ENCODE measurements at regions of chr20 and their contacts with region 1.

Region 1: DNA sequence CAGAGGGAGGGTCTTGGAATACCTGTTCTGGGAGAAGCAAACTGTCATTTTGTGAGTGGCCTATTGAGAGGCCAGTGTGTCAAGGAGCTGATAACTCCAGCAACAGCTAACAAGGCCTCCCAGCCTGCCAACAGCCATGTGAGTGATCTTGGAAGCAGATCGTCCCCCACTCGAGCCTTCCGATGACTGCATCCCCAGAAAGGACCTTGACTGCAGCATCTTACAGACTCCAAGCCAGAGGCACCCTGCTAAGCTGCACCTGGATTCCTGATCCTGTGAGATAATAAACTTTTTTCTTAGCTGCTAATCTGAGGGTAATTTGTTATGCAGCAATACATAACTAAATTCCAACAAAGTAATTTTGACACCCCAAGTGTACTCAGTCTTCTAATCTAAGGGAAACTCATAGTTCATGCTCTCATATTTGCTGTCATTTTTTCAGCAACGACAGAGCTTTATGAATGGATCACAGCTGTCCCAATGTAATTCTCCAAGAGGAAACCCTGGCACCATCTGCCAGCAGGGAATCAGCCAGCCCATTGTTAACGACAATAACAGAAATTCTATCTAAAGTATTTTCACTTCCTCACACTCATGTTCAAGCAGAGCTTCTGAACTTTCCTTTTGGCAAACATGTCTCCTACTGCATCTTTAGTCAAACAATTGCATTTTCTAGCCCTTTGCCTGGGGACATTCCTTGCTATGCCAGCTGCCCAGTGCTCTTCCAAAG is 470.2 kb upstream of the BTBD3 start:
- DNase-seq: no peak
- ATAC-seq: no peak
- H3K4me3 Mint-ChIP-seq: no peak overlapping the region
- H3K27ac Mint-ChIP-seq: no peak overlapping the region
- H3K4me1 Mint-ChIP-seq: no peaks in the 10 kb centered on the region
- H3K27me3 Mint-ChIP-seq: no peaks in the 10 kb centered on the region

Region 2: GRCh38 chr20:11168026-11168425 is 279.5 kb before region 1 on chr20:
- CTCF ChIA-PET with region 1: no interaction called
- POLR2A ChIA-PET with region 1: no interaction called
- intact Hi-C with region 1: no loop called
- DNase-seq: no peak
- ATAC-seq: no peak
- H3K4me3 Mint-ChIP-seq: no peak overlapping the region
- H3K27ac Mint-ChIP-seq: no peak overlapping the region
- H3K4me1 Mint-ChIP-seq: no peaks in the 10 kb centered on the region
- H3K27me3 Mint-ChIP-seq: peaks cover 3% of the 10 kb centered on the region

Region 3: GRCh38 chr20:11338496-11339306 is 108.8 kb before region 1 on chr20:
- CTCF ChIA-PET with region 1: no interaction called
- POLR2A ChIA-PET with region 1: no interaction called
- intact Hi-C with region 1: no loop called
- DNase-seq: no peak
- ATAC-seq: no peak
- H3K4me3 Mint-ChIP-seq: no peak overlapping the region
- H3K27ac Mint-ChIP-seq: no peak overlapping the region
- H3K4me1 Mint-ChIP-seq: no peaks in the 10 kb centered on the region
- H3K27me3 Mint-ChIP-seq: no peaks in the 10 kb centered on the region

Region 4: DNA sequence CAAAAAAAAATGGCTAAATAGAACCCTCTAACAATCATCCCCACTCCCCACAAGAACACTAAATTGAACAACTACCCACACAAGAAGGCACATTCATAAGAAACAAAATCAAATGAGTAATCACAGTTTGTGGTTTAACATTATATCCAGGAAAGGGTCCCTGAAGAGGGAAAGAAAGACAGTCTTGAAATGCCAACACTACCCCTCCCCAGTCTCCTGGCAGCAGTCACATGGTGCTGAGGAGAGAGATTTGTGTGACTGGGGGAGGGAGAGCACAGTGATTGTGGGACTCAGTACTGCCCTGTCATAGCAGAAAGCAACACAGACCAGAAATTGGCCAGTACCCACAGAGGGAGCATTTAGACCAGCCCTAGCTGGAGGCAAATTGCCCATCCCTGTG is 26.4 kb after region 1 on chr20:
- CTCF ChIA-PET with region 1: no interaction called
- POLR2A ChIA-PET with region 1: no interaction called
- intact Hi-C with region 1: no loop called
- DNase-seq: no peak
- ATAC-seq: no peak
- H3K4me3 Mint-ChIP-seq: no peak overlapping the region
- H3K27ac Mint-ChIP-seq: no peak overlapping the region
- H3K4me1 Mint-ChIP-seq: no peaks in the 10 kb centered on the region
- H3K27me3 Mint-ChIP-seq: peaks cover 2% of the 10 kb centered on the region

Region 5: GRCh38 chr20:11646359-11646758 is 198.8 kb after region 1 on chr20:
- CTCF ChIA-PET with region 1: no interaction called
- POLR2A ChIA-PET with region 1: no interaction called
- intact Hi-C with region 1: loop called in 1 of 2 experiments (anchors 10 kb)
- DNase-seq: no peak
- ATAC-seq: no peak
- H3K4me3 Mint-ChIP-seq: no peak overlapping the region
- H3K27ac Mint-ChIP-seq: no peak overlapping the region
- H3K4me1 Mint-ChIP-seq: no peaks in the 10 kb centered on the region
- H3K27me3 Mint-ChIP-seq: no peaks in the 10 kb centered on the region

Measured in activated CD4-positive, alpha-beta T cell treated with anti-CD3 and anti-CD28 coated beads for 36 hours (primary cell).